PC-9 (cell line): ENCODE measurements at regions of chr22 and their contacts with region 1.

Region 1: GRCh38 chr22:25840167-25840566 is 98.2 kb downstream of the MYO18B start:
- DNase-seq: no peak
- H3K4me3 ChIP-seq: no peak overlapping the region
- H3K27ac ChIP-seq: no peak overlapping the region
- H3K4me1 ChIP-seq: no peaks in the 10 kb centered on the region
- H3K27me3 ChIP-seq: peaks cover 76% of the 10 kb centered on the region
- CTCF ChIP-seq: no peak

Region 2: DNA sequence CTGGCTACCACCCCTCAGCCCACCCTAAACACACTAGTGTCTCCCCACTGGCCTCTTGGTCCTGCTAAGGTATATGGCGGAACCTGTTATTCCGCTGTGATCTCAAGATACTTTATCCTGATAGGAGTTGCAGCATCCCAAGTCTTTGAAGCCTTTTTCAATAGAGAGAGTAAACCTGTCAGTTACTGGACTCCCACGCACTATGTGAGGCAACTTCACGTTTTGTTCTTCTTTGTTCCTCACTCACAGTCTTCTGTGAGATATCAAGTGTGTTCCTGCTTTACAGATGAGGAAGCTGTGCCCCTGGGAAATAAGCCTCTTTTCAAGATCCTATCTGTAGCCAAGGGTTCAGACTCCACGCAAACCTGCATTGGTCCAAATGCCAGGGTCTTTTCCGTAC is 29.6 kb after region 1 on chr22:
- CTCF ChIA-PET with region 1: no interaction called
- POLR2A ChIA-PET with region 1: interaction called, 12 read pairs
- intact Hi-C with region 1: no loop called
- DNase-seq: no peak
- H3K4me3 ChIP-seq: no peak overlapping the region
- H3K27ac ChIP-seq: no peak overlapping the region
- H3K4me1 ChIP-seq: no peaks in the 10 kb centered on the region
- H3K27me3 ChIP-seq: peaks cover 69% of the 10 kb centered on the region
- CTCF ChIP-seq: no peak